GM18951 (cell line): ENCODE measurements at regions of chr16 and their contacts with region 1.

Region 1: GRCh38 chr16:69143116-69143515 is 10.7 kb downstream of the UTP4 start:
- POLR2A ChIP-seq: no peak

Region 2: GRCh38 chr16:69286941-69287713 is 144.0 kb after region 1 on chr16:
- in situ Hi-C with region 1: loop called (anchors 10 kb)
- POLR2A ChIP-seq: no peak

Region 3: DNA sequence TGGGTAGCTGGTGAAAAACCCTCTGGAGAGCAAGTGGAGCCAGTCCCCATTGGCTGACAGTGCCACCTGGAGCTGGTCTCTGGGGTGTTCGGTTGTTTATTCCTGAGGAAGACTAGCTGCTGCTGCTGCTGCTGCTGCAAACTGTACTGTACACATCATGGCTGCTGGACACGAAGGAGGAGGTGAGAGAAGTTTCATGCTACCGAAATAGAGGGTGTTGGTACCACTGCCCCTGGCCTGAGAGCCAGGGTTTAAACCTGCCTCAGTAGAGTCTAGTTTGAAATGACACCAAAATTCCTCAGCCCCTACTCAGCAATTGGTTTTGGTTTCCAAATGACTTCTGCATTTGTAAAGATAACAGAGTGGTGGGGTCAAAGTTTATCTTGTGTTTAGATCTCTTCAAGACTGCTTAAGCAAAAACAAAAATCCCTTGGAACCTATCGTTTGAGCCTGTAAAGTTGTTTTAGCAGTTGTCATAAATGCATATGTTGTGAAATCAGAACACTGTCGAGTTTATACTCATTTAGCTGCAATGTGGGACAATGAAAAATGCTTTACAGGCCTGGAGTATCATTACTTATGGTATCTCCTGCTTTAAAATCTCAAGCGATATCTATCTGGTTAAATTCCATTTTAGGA is 322.1 kb after region 1 on chr16:
- in situ Hi-C with region 1: no loop called
- POLR2A ChIP-seq: peak; percentile 36